ENCODE measurements at regions of chr4 and their contacts with region 1.

Region 1: GRCh38 chr4:12633053-12633651 is 851.0 kb downstream of the RAB28 start:
- DNase-seq: peak; percentile 11 to 65 (median 51)
- ATAC-seq: peak; percentile 76
- H3K4me3 ChIP-seq: no peak overlapping the region
- H3K4me3 Mint-ChIP-seq: no peak overlapping the region
- H3K27ac ChIP-seq: no peak overlapping the region
- H3K27ac Mint-ChIP-seq: no peak overlapping the region
- H3K4me1 ChIP-seq: no peaks in the 10 kb centered on the region
- H3K4me1 Mint-ChIP-seq: peaks cover 0 to 2% (median 0%) of the 10 kb centered on the region in 7 donors
- H3K27me3 ChIP-seq: no peaks in the 10 kb centered on the region
- H3K27me3 Mint-ChIP-seq: peaks cover 2 to 31% (median 28%) of the 10 kb centered on the region in 5 donors

Region 2: DNA sequence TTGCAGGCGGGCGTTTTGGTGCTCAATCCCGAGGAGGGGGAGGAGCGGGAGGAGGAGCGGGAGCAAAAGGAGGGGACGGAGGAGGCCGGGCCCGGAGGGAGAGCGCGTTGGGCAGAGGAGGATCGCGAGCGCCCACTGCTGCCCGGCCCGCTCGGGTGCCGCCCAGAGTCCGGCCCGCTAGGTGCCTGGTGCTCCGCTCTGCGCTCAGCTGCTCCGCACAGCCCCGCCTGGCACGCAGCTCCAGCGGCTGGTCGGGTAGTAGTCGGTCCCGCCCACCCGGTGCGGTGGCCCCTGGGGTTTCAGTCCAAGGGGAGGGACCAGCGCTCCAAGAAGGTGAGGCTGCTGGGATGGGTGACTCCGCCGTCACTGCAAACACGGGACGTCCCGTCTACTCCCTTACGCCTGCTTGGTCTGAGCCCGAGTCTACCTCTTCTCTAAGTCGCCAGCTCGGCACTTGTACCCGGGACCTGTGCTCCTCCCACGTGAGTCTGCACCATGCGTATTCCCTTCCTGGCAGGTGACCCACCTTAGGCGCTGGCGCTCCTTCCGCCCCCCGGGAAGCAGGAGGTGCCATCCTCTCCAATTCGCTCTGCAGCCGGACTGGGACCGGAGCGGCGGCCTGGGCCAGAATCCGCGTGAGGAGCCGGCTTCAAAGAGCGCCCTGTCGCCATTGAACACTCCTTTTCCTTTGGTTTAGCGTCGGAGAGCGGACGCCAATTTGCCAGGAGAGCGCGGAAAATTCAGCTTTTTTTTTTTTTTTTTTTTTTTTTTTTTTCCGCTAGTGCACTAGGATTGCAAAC is 1204.1 kb before region 1 on chr4:
- CTCF ChIA-PET with region 1: no interaction called
- POLR2A ChIA-PET with region 1: no interaction called
- intact Hi-C with region 1: loop called in 1 of 2 experiments (anchors 10 kb)
- DNase-seq: peak in 6 of 9 donors; percentile 8 to 52 (median 21)
- ATAC-seq: peak; percentile 83
- H3K4me3 ChIP-seq: peak overlapping the region; percentile 43
- H3K4me3 Mint-ChIP-seq: peak overlapping the region; percentile 69 to 84 (median 77)
- H3K27ac ChIP-seq: no peak overlapping the region
- H3K27ac Mint-ChIP-seq: no peak overlapping the region
- H3K4me1 ChIP-seq: peaks cover 0 to 8% of the 10 kb centered on the region in 2 donors
- H3K4me1 Mint-ChIP-seq: peaks cover 8 to 23% (median 14%) of the 10 kb centered on the region in 7 donors
- H3K27me3 ChIP-seq: no peaks in the 10 kb centered on the region
- H3K27me3 Mint-ChIP-seq: peaks cover 18 to 74% (median 32%) of the 10 kb centered on the region in 5 donors

Region 3: DNA sequence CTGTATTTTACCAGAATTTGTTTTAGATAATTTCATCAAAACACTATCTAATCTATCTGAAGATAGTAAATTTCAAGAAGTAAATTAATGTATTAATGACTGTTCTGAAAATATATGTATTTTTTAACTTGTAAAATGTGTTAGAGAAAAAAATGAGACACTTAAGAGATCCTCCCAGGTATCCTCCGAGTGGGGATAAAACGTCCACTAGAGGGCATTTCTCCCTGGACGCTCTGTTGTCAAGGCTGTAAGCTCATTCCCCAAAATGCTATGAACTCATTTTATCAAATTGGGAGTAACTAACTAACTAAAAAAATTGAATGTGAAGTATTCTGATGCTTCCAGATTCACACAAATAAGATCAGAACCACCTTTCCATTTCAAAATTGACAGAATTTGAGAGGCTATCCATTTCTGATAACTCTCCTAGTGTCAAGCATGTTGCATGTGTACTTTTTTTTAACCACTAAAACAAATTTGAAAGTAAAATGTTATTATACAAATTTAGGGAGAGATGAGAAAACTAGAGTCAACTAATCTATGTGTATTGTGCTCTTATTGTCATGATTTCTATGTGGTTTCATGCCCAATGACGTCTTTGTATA is 867.2 kb before region 1 on chr4:
- CTCF ChIA-PET with region 1: no interaction called
- POLR2A ChIA-PET with region 1: no interaction called
- intact Hi-C with region 1: loop called (anchors 1 to 10 kb)
- DNase-seq: peak in 4 of 9 donors; percentile 1 to 20 (median 8)
- ATAC-seq: no peak
- H3K4me3 ChIP-seq: no peak overlapping the region
- H3K4me3 Mint-ChIP-seq: no peak overlapping the region
- H3K27ac ChIP-seq: no peak overlapping the region
- H3K27ac Mint-ChIP-seq: no peak overlapping the region
- H3K4me1 ChIP-seq: no peaks in the 10 kb centered on the region
- H3K4me1 Mint-ChIP-seq: no peaks in the 10 kb centered on the region
- H3K27me3 ChIP-seq: no peaks in the 10 kb centered on the region
- H3K27me3 Mint-ChIP-seq: peaks cover 0 to 8% (median 5%) of the 10 kb centered on the region in 5 donors

Measured in naive thymus-derived CD4-positive, alpha-beta T cell (primary cell).